ENCODE measurements at regions of chr6 and their contacts with region 1.

Region 1: DNA sequence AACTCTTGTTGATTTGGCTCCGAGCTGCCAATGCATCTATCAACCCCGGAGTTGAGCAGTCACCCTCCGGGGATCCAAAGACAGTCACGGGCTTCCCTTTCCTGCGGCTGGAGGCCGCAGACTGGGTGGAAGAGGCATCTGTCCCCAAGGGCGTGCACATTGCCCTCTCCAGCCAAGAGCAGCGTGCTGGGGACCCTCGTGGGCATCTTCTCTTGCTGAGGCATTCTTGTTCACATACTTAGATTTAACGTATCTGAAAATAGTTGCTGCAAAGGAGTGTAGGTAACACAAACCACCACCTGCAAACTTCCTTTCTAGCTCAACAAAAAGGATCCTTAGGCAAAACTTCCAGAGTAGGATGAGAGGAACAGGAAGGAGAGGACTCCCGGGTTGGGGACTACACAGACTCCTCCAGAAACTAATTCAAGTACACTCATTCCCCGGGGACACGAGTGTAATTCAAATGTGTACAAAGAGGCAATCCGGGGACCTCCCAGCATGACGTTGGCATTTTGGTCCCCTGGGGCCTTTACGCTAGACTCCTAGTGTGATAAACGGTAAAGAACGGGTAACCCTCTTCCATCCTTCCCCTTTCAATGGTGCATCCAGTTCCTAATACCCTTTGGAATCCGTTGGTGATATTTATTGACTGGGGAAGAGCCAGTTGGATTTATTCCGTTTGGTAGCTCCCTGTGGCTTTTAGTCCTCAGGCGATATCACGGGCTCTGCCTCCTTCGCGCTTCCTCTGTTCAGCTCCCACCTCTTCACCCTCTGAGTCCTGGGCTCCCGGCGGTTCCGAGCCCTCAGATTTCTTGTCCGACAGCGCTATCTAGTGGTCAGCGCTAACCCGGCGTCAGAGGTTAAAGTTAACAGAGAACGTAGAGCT is 2.7 kb upstream of the COL12A1 start:
- DNase-seq: no peak
- H3K4me3 ChIP-seq: peak overlapping the region; percentile 6
- CTCF ChIP-seq: peak; percentile 79

Region 2: DNA sequence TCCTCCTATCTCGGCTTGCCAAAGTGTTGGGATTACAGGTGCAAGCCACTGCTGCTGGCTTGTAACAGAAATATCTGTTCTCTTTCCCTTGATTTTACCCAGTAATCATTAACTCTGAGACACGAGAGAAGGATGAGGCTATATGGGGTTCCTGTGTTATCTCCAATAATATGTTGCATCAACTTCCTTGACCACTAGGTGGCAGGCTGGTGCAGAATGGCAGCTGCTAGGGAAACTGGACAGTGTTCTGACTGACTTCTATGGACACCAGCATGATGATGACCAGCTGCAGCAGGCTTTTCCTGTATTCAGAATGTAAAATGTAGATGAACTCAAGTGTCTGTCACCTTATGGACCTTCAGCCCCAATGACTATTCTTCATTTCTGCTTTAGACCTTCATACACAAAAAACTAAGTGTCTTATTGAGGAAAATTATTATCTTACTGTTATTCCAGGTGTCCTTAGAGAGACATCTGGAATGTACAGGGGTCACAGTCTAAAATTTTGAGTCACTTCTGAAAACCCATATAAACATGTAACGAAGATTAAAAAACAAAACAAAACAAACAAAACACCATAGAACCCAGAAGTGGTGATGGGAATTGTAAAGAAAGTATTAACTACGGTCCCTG is 1533.0 kb before region 1 on chr6:
- CTCF ChIA-PET with region 1: interaction called, 28 read pairs
- POLR2A ChIA-PET with region 1: no interaction called
- DNase-seq: no peak
- H3K4me3 ChIP-seq: no peak overlapping the region
- CTCF ChIP-seq: peak; percentile 87

Region 3: DNA sequence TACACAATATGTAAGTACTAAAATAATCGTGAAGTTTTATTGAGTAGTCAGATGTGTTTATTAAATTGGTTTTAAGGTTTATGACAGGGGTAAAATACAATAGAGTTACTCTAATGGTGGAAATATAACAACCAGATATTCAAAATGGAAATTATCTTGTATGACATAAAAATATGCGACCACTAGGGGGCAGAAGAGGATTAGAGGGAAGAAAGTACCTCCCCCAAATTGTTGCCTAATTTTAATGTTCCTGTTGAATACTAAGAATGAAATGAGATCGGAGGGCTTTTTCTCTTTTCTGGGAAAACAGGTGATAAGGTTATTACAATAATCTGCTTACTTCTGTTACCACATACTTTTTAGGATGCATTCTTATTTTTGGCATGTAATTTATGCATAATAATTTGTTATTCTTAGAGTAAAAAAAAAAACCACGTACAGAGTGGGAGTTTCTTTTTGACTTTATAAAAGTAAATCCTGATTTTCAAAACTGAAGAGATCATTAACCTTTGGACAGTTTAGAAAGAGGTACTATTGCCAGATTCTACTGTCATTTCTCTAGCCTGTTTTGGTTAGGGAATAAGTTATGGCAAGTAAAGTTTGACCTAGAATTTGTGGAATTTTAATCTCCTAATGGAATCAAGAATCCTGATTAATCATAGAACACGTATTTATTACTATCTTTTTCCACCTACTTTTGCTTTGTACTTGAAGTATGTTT is 1353.4 kb before region 1 on chr6:
- CTCF ChIA-PET with region 1: interaction called, 118 read pairs
- POLR2A ChIA-PET with region 1: no interaction called
- DNase-seq: no peak
- H3K4me3 ChIP-seq: no peak overlapping the region
- CTCF ChIP-seq: peak; percentile 50

Region 4: GRCh38 chr6:74091136-74091793 is 1117.3 kb before region 1 on chr6:
- CTCF ChIA-PET with region 1: interaction called, 328 read pairs
- POLR2A ChIA-PET with region 1: interaction called, 5 read pairs
- DNase-seq: no peak
- H3K4me3 ChIP-seq: no peak overlapping the region
- CTCF ChIP-seq: peak; percentile 45

Region 5: DNA sequence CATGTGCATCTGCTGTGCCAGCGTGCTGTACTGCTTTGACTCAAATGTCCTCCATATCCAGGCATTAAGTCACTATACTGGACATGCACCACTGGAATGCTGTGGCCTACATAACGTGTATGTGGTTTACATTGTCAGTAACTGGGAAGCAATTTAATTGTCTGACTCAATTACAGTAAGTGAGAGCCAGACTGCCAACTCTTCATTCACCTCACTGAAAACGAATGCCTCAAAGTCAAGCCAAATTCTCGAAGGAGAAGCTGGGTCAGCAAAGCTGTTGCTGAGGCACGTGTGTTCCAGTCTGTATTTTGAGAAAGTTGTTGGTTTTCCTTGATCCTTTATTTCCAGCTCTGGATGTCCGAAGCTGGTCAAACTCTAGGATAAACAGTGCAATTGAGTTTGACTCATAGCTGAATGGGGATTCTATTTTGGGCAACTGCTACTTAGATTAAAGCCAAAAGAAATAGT is 536.9 kb before region 1 on chr6:
- CTCF ChIA-PET with region 1: interaction called, 3 read pairs
- POLR2A ChIA-PET with region 1: interaction called, 14 read pairs
- DNase-seq: peak; percentile 98
- H3K4me3 ChIP-seq: no peak overlapping the region
- CTCF ChIP-seq: no peak

Region 6: DNA sequence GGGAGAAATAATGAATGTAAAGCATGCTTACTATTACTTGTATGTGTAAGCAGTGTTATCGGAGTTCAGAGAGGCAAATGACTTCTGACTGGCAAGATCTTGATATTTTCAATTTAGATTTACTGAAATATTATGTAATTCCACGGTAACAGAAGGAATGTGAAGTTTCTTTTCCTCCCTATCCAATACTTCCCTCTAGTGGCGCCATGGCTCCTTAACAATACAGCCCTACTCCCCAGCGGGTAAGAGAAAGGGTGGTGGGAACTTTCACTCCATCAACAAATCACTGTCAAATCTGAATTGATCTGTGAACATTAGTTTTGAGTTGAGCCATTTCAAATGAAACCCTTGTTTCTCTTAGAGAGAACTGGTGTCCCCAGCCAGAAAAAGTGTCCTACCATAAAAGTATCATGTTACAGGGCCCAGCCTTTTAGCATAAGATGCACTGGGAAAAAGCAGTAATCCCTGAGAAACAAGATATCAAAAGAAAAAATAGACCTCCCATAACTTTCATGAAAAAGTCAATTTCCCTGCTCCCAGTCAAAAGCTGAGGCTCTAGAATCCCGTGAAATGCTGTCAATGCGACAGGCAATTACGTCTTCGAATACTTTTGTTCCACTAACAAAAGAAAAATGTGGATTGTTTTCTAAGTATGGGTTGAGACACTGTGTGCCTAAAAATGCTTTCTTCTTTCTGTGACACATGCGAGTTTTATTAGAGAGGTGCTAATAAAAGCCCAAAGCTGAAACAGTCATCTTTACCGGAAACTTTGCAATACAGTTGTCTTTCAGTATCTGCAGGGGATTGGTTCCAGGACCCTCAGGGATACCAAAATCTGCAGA is 22.2 kb after region 1 on chr6:
- CTCF ChIA-PET with region 1: interaction called, 77 read pairs
- POLR2A ChIA-PET with region 1: interaction called, 3 read pairs
- DNase-seq: no peak
- H3K4me3 ChIP-seq: no peak overlapping the region
- CTCF ChIP-seq: peak; percentile 73

Region 7: GRCh38 chr6:75418233-75418632 is 209.7 kb after region 1 on chr6:
- CTCF ChIA-PET with region 1: no interaction called
- POLR2A ChIA-PET with region 1: no interaction called
- DNase-seq: no peak
- H3K4me3 ChIP-seq: no peak overlapping the region
- CTCF ChIP-seq: no peak

Region 8: DNA sequence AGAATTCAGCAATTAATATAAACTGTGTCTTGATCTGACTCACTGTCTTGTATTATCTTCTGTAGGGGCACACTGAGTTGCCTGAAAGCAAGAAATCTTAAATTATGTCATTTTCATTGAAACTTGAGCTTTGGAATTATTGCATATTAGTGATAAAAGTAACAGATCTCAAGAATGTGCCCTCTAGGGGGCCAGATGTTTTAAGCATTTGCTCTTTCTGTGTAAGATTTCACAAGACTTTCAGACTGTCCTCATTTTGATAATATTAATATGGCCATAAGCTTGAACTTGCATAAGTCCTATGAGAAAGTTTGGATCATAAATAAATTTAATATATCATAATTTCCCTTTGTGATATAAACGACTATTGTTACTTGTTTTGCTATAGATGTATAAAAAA is 485.0 kb after region 1 on chr6:
- CTCF ChIA-PET with region 1: no interaction called
- POLR2A ChIA-PET with region 1: no interaction called
- DNase-seq: peak; percentile 7
- H3K4me3 ChIP-seq: no peak overlapping the region
- CTCF ChIP-seq: peak; percentile 11